Endothelial cell of umbilical vein (primary cell): ENCODE measurements at regions of chr10 and their contacts with region 1.

Region 1: DNA sequence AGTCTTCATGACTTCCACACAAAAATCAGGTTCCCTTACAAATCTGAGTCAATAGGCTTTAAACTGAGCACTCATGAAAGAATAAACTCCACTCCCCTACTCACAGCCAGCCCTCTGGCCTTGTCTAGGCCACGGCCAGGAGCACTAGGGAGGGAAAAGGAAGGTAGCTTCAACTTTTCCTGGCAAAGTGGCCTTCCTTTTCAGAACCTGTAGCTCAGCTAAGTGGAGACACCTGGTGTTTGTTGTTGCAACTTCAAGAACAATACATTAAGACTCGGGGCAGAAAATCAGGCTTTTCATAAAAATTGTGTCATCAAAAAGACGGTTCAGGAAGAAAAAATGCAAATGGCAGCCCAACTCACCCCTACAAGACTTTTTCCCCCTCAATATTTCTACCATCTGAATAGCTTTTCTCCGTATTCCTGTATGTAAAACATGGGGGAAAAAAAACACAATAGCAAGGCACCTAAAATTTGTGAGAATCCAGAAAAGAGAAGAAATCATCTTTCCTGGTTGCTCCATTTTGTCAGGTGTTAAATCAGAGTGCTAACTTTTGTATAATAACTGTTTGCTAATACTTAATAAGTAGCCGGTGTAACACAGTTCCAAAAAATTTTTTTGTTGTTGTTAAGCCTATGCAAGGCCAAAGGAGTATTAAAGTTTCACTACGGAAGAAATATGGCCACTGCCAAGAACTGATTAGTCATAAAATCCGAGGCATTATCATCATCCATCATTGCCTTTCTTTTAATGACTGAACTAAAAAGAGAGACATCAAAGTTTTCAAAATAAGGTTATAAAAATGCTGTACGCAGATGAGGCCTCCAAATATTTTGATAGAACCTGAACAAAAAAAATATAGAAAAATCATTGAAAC is 66.2 kb upstream of the ARID5B start:
- DNase-seq: peak; percentile 90
- H3K4me3 ChIP-seq: no peak overlapping the region
- H3K27ac ChIP-seq: peak overlapping the region; percentile 81
- H3K4me1 ChIP-seq: peaks cover 44% of the 10 kb centered on the region
- H3K27me3 ChIP-seq: no peaks in the 10 kb centered on the region
- CTCF ChIP-seq: peak; percentile 45
- POLR2A ChIP-seq: no peak

Region 2: GRCh38 chr10:60944159-60944909 is 891.0 kb before region 1 on chr10 and contains the start of gene RHOBTB1:
- CTCF ChIA-PET with region 1: interaction called, 3 read pairs
- POLR2A ChIA-PET with region 1: no interaction called
- dilution Hi-C with region 1: no loop called
- intact Hi-C with region 1: loop called (anchors 5 kb)
- DNase-seq: peak; percentile 85
- H3K4me3 ChIP-seq: peak within 1 kb of the TSS; percentile 74 to 91 (median 86)
- H3K27ac ChIP-seq: peak within 1 kb of the TSS; percentile 98
- H3K4me1 ChIP-seq: peaks cover 18% of the 10 kb centered on the region
- H3K27me3 ChIP-seq: no peaks in the 10 kb centered on the region
- CTCF ChIP-seq: no peak
- POLR2A ChIP-seq: peak; percentile 71
- total RNA-seq, gene RHOBTB1: 31.0 and 31.3 TPM in 2 replicates

Region 3: DNA sequence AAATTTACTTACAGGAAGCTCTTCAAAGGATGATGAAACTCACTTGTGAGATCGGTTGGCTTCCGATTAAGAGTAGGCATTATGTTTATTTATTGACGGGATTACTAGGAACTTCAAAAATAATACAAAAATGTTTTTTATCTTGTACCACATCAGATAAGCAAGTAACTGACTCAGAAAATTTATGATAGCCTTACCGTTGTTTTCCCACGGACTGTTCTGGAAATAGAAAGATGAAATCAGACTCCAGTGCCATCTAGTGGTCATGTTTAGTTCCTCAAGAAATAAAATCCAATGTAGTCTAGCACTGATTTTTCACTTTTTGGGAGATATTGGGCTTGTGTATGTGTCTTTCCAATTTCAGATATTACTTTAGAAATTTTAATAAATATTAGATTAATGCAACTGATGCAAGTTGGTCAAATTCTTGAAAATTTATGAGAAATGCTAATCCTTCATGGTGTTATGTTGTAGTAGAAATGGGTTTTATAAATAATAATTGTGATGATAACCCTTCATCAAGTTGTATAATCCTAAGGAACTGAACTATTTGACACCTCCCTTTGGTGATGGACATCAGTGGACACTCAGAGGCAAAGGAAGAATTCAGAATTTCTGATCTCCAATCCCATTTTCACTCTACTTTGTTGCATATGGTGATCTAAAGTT is 551.0 kb before region 1 on chr10:
- CTCF ChIA-PET with region 1: interaction called, 5 read pairs
- POLR2A ChIA-PET with region 1: no interaction called
- dilution Hi-C with region 1: no loop called
- intact Hi-C with region 1: loop called (anchors 1 kb)
- DNase-seq: peak; percentile 83
- H3K4me3 ChIP-seq: no peak overlapping the region
- H3K27ac ChIP-seq: no peak overlapping the region
- H3K4me1 ChIP-seq: peaks cover 12% of the 10 kb centered on the region
- H3K27me3 ChIP-seq: no peaks in the 10 kb centered on the region
- CTCF ChIP-seq: peak; percentile 39 to 48
- POLR2A ChIP-seq: no peak

Region 4: DNA sequence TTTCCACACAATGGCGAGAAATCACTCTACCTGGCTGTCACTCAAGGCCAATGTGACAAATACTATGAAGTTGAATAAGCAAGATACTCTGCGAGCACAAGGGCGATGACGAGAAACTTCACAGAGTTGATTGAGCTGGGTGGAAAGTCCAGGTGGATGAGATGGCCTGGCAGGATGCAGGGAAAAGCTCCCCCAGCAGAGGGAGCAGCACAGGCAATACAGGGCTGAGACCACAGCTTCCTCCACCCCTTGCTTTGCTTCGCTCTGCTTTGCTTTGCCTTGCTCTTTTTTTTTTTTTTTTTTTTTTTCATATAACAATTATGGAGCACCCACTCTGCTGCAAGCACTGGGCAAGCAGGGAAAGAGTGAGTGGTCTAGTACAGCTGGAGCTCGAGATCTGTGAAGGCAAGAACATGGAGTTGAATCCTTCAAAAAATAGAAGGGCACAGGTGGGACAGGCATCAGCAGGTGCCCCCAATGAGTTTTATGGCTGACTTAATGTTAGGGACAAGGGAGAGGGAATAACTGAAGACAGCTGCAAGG is 84.3 kb before region 1 on chr10:
- CTCF ChIA-PET with region 1: interaction called, 165 read pairs
- POLR2A ChIA-PET with region 1: interaction called, 7 read pairs
- dilution Hi-C with region 1: no loop called
- intact Hi-C with region 1: loop called (anchors 1 kb)
- DNase-seq: peak; percentile 58
- H3K4me3 ChIP-seq: no peak overlapping the region
- H3K27ac ChIP-seq: no peak overlapping the region
- H3K4me1 ChIP-seq: peaks cover 18% of the 10 kb centered on the region
- H3K27me3 ChIP-seq: no peaks in the 10 kb centered on the region
- CTCF ChIP-seq: peak; percentile 82 to 86
- POLR2A ChIP-seq: no peak

Region 5: DNA sequence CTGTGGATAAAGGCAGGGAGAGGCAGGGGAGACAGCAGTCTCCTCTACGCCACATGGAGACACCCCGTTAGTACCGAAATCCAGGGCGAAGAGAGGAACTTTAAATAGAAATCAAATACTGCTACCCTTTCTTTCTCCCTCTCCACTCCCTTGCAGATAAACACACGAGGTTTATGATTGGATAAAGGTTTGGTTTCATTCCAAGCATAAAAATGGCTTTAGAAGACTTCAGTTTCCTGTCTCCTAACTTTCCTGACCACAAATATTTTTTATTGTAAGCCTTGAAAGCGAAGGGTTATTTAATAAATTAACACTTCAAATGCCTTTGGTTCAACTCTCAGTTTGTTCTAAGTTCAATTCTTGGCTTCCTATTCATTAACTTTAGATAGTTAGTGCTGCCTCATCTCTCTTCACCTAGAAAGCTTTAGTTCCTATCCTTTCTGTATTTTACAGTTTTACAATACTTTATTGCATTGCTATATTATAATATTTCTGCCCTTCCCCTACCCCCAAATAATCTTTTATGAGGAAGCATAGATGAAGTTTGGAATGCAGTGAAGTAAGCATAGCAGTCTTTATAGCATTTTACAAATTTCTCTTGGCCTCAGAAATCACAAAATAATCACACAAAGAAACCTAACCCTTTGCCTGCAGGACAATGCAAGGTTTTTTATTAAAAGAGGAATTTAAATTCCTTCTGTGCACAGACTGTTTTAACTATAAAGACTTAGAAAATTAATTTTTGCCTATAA is 34.6 kb after region 1 on chr10:
- CTCF ChIA-PET with region 1: interaction called, 3 read pairs
- POLR2A ChIA-PET with region 1: no interaction called
- dilution Hi-C with region 1: no loop called
- intact Hi-C with region 1: loop called (anchors 2 kb)
- DNase-seq: peak; percentile 24
- H3K4me3 ChIP-seq: no peak overlapping the region
- H3K27ac ChIP-seq: no peak overlapping the region
- H3K4me1 ChIP-seq: no peaks in the 10 kb centered on the region
- H3K27me3 ChIP-seq: peaks cover 0 to 1% of the 10 kb centered on the region in 2 experiments
- CTCF ChIP-seq: no peak
- POLR2A ChIP-seq: no peak

Region 6: DNA sequence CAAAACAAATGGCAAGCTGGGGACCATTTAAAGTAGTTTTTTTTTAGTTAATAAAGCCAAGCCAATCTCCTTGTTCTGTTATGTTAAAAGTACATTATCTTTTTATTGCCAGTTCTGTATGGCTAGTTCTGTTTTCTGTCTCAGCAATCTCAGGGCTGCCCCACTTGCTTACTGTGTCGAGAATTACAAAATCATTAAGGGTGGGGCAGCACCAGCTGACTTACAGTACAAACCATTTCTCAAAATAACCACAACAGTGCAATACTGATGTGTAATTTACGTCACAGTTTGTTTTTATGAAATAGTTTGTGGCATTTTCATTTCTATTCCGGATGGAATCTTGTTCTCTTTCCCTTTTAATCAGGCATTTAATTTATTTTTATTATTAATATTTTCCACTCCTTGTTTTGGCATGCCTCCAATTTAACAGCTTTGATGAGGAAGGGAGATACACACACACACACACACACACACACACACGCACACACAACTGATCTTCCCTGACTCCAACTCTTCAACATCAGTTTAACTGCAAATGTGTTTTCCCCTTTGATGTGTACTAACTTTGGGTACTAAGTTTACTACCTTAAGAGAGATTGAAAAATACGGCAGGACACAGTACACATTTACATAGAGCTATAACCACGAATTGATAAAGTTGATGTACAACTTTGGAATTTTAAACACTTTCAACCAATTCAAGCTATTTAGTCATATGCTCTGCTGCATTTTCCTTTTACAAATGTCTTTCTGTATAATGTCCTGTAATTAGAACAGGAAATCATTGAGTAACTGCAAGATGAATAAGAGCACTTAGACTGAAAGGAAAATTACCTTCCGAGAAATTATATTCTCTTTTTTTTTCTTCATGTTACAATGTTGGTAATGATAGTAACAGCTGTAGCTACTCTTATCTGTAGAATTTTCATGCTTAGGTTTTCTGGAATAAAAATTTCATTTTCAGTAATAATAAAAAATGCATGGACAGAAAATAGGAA is 157.7 kb after region 1 on chr10:
- CTCF ChIA-PET with region 1: no interaction called
- POLR2A ChIA-PET with region 1: no interaction called
- dilution Hi-C with region 1: no loop called
- intact Hi-C with region 1: loop called (anchors 2 kb)
- DNase-seq: peak; percentile 78
- H3K4me3 ChIP-seq: peak overlapping the region in 1 of 3 experiments; percentile 46
- H3K27ac ChIP-seq: peak overlapping the region; percentile 50
- H3K4me1 ChIP-seq: peaks cover 23% of the 10 kb centered on the region
- H3K27me3 ChIP-seq: no peaks in the 10 kb centered on the region
- CTCF ChIP-seq: no peak
- POLR2A ChIP-seq: no peak

Region 7: DNA sequence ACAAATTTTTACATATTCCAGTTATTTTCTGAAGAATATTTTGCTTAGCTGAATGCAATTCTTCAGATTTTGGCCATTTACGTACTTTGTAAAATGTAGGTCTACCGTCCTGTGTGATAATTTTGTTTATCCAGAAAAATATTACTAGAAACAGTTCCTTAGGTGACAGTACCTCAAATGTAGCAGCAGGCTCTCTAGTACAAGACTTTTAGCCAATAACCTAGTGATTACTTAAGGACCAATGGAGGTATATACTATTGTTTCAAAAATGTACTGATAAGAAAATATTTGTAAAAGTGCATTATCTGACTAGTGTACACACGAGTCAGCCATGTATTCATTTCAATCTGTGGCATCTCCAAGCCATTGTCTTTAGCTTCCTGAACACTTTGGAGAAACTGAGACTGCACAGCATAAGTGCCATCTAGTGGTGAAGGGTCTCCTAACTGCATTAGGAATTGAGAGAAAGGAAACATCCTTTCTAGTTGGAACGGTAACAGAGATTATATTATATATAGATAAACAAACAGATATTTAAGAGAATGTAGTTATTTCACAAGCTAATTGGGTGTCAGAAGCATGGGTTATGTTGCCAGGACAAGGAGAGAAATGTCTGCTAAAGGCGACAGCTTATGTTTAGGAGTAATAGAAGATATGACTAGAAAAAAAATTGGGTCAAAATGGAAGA is 409.6 kb after region 1 on chr10:
- CTCF ChIA-PET with region 1: interaction called, 6 read pairs
- POLR2A ChIA-PET with region 1: no interaction called
- dilution Hi-C with region 1: no loop called
- intact Hi-C with region 1: loop called (anchors 1 kb)
- DNase-seq: peak; percentile 86
- H3K4me3 ChIP-seq: no peak overlapping the region
- H3K27ac ChIP-seq: no peak overlapping the region
- H3K4me1 ChIP-seq: peaks cover 17% of the 10 kb centered on the region
- H3K27me3 ChIP-seq: no peaks in the 10 kb centered on the region
- CTCF ChIP-seq: peak; percentile 63 to 71
- POLR2A ChIP-seq: no peak